ENCODE measurements at regions of chr6 and their contacts with region 1.

Region 1: DNA sequence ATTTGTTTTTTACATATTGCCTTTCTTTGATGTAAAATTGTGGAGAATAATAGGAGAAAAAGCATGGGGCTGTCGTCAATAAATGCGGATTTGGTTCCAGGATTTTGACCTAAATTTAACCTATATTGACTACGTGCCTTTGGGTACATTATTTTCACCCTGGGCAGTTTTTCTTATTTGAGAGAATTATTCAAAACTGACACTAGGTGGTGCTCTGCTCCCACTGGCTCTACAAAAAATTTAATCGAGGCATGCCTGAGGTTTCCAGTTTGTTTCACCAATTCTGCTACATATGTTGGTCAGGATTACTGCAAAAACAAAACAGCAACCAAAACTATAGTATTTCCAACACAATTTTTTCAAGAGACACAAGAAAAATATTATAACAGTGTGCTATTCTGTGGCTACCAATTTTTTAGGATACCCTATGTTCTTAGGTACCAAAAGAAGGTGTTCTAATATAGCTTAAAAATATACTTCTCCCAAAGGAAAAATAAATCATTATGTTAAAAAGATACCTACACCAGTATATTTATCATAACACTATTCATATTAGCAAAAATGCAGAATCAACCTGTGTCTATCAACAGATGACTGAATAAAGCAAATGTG is 48.6 kb upstream of the FABP7 start:
- DNase-seq: peak in 1 of 10 donors; percentile 46
- H3K4me3 ChIP-seq: peak overlapping the region in 5 of 59 donors; percentile 3 to 27 (median 14)
- H3K27ac ChIP-seq: peak overlapping the region in 1 of 59 donors; percentile 66
- H3K27me3 ChIP-seq: no peaks in the 10 kb centered on the region
- CTCF ChIP-seq: peak; percentile 74 to 95 (median 86)

Region 2: DNA sequence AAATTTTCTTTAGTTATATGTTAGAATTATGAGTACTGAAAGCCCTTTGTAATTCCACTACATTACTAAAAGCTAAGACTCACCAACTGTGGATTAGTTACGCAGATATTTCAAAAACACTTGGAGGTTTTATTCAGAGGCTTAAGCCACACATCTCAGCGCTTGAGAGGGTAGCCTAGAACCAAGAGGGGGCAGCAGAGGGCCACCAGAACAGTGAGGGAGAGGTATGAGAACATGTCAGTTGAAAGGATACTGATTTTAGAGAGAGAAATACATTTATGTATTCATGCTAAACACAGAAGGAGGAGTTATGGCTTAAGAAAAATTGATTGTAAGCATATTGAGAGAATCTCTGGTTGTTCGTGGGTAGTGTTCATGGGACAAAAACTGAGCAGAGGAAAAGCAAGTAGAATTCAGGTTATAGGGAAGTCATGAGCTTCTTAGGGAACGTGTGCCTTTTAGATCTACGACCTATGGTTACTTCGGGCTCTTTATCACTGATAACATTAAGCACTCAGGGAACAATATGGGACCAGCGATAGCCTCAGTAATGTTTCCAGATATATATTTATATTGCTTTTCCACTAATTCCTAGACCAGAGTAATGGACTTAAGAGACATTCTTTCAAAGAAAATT is 238.8 kb before region 1 on chr6:
- intact Hi-C with region 1: loop called in 1 of 2 experiments (anchors 10 kb)
- DNase-seq: peak in 9 of 10 donors; percentile 45 to 79 (median 74)
- H3K4me3 ChIP-seq: peak overlapping the region in 2 of 59 donors; percentile 5 to 6
- H3K27ac ChIP-seq: no peak overlapping the region
- H3K27me3 ChIP-seq: no peaks in the 10 kb centered on the region
- CTCF ChIP-seq: peak; percentile 46 to 93 (median 81)

Region 3: GRCh38 chr6:122609856-122610689 is 120.8 kb before region 1 on chr6 and contains the start of gene PKIB:
- intact Hi-C with region 1: loop called in 1 of 2 experiments (anchors 5 kb)
- DNase-seq: peak; percentile 50 to 92 (median 67)
- H3K4me3 ChIP-seq: peak within 1 kb of the TSS; percentile 42 to 90 (median 70)
- H3K27ac ChIP-seq: peak within 1 kb of the TSS in 7 of 59 donors; percentile 6 to 71 (median 7)
- H3K27me3 ChIP-seq: peaks cover 0 to 10% (median 0%) of the 10 kb centered on the region in 45 donors
- CTCF ChIP-seq: peak in 46 of 56 donors; percentile 6 to 62 (median 36)
- total RNA-seq, gene PKIB: 1.0 to 8.9 (median 4.3) TPM

Region 4: DNA sequence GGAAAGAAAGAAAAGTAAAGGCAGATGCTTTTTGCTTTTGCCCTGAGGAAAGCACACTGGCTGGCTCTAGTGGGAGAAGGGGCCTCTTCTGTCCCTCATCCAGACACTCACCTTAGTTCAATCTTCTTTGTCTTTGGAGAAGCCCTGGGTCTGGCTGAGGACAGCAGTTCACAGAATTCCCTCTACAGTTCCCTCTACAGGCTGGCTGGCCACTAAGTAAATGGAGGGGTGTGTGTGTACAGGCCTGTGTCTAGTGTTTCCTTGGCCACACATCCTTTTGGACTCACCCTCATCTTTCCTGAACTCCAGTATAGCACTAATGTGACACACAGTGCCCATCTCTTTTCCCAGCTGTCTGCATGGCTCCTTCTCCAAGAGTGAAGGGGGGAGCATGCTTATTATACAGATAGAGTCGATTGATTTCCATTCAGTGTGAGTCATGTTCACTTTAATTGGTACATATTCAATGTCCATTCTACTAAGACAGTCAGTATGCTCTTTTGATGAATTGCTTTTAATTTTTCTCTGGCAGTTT is 239.2 kb after region 1 on chr6:
- intact Hi-C with region 1: no loop called
- DNase-seq: no peak
- H3K4me3 ChIP-seq: no peak overlapping the region
- H3K27ac ChIP-seq: no peak overlapping the region
- H3K27me3 ChIP-seq: no peaks in the 10 kb centered on the region
- CTCF ChIP-seq: no peak

Region 5: GRCh38 chr6:123316733-123317323 is 585.9 kb after region 1 on chr6:
- intact Hi-C with region 1: loop called (anchors 2 to 5 kb)
- DNase-seq: no peak
- H3K4me3 ChIP-seq: no peak overlapping the region
- H3K27ac ChIP-seq: no peak overlapping the region
- H3K27me3 ChIP-seq: no peaks in the 10 kb centered on the region
- CTCF ChIP-seq: peak; percentile 57 to 95 (median 78)